Naive thymus-derived CD4-positive, alpha-beta T cell (primary cell): ENCODE measurements at regions of chr11 and their contacts with region 1.

Region 1: GRCh38 chr11:61384271-61385242 is 7.8 kb upstream of the TMEM216 start:
- DNase-seq: no peak
- ATAC-seq: no peak
- H3K4me3 ChIP-seq: no peak overlapping the region
- H3K4me3 Mint-ChIP-seq: no peak overlapping the region
- H3K27ac ChIP-seq: no peak overlapping the region
- H3K27ac Mint-ChIP-seq: peak overlapping the region in 1 of 9 donors; percentile 30
- H3K4me1 ChIP-seq: no peaks in the 10 kb centered on the region
- H3K4me1 Mint-ChIP-seq: peaks cover 0 to 9% (median 7%) of the 10 kb centered on the region in 7 donors
- H3K27me3 ChIP-seq: no peaks in the 10 kb centered on the region
- H3K27me3 Mint-ChIP-seq: no peaks in the 10 kb centered on the region

Region 2: GRCh38 chr11:60775420-60775961 is 609.1 kb before region 1 on chr11:
- CTCF ChIA-PET with region 1: no interaction called
- POLR2A ChIA-PET with region 1: no interaction called
- intact Hi-C with region 1: loop called in 1 of 2 experiments (anchors 1 kb)
- DNase-seq: peak; percentile 62 to 90 (median 86)
- ATAC-seq: peak; percentile 99
- H3K4me3 ChIP-seq: no peak overlapping the region
- H3K4me3 Mint-ChIP-seq: peak overlapping the region in 3 of 10 donors; percentile 8 to 58 (median 48)
- H3K27ac ChIP-seq: no peak overlapping the region
- H3K27ac Mint-ChIP-seq: peak overlapping the region in 5 of 9 donors; percentile 4 to 78 (median 14)
- H3K4me1 ChIP-seq: no peaks in the 10 kb centered on the region
- H3K4me1 Mint-ChIP-seq: peaks cover 4 to 14% (median 10%) of the 10 kb centered on the region in 7 donors
- H3K27me3 ChIP-seq: no peaks in the 10 kb centered on the region
- H3K27me3 Mint-ChIP-seq: peaks cover 0 to 6% (median 0%) of the 10 kb centered on the region in 5 donors

Region 3: DNA sequence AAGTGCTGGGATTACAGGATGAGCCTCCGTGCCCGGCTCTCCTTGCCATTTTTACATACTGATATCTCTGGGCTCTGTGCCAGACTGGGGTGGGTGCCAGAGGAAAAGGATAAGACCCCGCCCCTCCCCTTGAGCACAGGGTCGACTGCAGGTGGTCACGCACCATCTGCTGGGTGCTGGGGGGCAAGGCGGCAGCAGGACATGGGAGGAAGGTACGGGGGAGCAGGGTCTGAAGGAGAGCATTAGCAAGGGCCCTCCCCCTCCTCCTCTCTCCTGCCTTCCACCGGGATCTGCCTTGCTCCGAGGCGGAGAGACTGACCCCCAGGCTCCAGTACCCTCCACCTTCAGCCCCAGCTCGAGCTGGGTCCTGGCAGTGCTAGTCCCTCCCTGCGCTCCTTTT is 191.0 kb before region 1 on chr11:
- CTCF ChIA-PET with region 1: no interaction called
- POLR2A ChIA-PET with region 1: no interaction called
- intact Hi-C with region 1: loop called in 1 of 2 experiments (anchors 5 kb)
- DNase-seq: no peak
- ATAC-seq: no peak
- H3K4me3 ChIP-seq: no peak overlapping the region
- H3K4me3 Mint-ChIP-seq: no peak overlapping the region
- H3K27ac ChIP-seq: no peak overlapping the region
- H3K27ac Mint-ChIP-seq: no peak overlapping the region
- H3K4me1 ChIP-seq: no peaks in the 10 kb centered on the region
- H3K4me1 Mint-ChIP-seq: peaks cover 0 to 4% (median 0%) of the 10 kb centered on the region in 7 donors
- H3K27me3 ChIP-seq: no peaks in the 10 kb centered on the region
- H3K27me3 Mint-ChIP-seq: peaks cover 0 to 22% (median 6%) of the 10 kb centered on the region in 5 donors

Region 4: GRCh38 chr11:61254403-61255025 is 130.0 kb before region 1 on chr11:
- CTCF ChIA-PET with region 1: interaction called, 8 read pairs
- POLR2A ChIA-PET with region 1: no interaction called
- intact Hi-C with region 1: loop called (anchors 1 kb)
- DNase-seq: peak; percentile 7 to 72 (median 47)
- ATAC-seq: peak; percentile 85
- H3K4me3 ChIP-seq: no peak overlapping the region
- H3K4me3 Mint-ChIP-seq: no peak overlapping the region
- H3K27ac ChIP-seq: no peak overlapping the region
- H3K27ac Mint-ChIP-seq: no peak overlapping the region
- H3K4me1 ChIP-seq: no peaks in the 10 kb centered on the region
- H3K4me1 Mint-ChIP-seq: peaks cover 0 to 3% (median 0%) of the 10 kb centered on the region in 7 donors
- H3K27me3 ChIP-seq: no peaks in the 10 kb centered on the region
- H3K27me3 Mint-ChIP-seq: peaks cover 0 to 4% (median 0%) of the 10 kb centered on the region in 5 donors